Gastrocnemius medialis (tissue), 4 donors: ENCODE measurements at regions of chr7 and their contacts with region 1.

Region 1: GRCh38 chr7:154927624-154928143 is 75.2 kb downstream of the PAXIP1 start:
- DNase-seq: peak; percentile 65 to 71
- ATAC-seq: peak; percentile 80 to 84
- H3K4me3 ChIP-seq: peak overlapping the region; percentile 66 to 77 (median 72)
- H3K27ac ChIP-seq: peak overlapping the region; percentile 82 to 88 (median 84)
- H3K4me1 ChIP-seq: peaks cover 5 to 9% of the 10 kb centered on the region in 2 donors
- H3K27me3 ChIP-seq: no peaks in the 10 kb centered on the region
- CTCF ChIP-seq: peak; percentile 40 to 72 (median 69)
- POLR2A ChIP-seq: no peak

Region 2: DNA sequence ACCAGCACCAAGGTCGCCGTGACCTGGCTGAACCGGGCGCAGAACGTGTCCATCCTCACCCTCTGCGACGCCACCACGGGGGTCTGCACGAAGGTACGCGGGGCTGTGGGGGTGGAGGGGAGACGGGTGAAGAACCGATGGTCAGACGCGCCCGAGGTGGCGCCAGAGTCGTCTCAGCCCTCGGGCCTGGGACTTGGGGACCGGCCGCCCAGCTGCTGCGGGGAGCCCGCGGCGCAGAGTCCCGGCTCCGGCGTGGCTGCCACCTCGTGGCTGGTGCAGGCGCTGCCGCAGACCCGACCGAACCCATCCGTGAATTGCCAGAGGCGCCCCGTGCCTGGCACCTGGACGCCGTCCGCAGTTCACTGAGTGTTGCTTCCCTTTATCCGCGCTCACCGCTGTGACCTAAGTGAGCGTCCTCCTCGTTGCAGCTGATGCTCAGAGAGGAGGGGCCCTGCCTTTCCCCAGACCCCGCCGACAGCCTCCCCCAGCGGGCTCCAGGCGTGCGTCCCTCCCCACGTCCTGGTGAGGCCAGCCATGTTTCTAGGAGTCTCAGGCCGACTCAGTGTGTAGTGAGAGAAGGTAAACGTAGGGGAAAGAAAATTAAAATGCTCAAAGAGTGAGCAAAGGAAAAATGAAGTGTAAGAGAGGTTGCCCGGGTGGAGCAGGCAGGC is 133.4 kb before region 1 on chr7:
- in situ Hi-C with region 1: no loop called
- intact Hi-C with region 1: no loop called
- DNase-seq: no peak
- ATAC-seq: no peak
- H3K4me3 ChIP-seq: no peak overlapping the region
- H3K27ac ChIP-seq: no peak overlapping the region
- H3K4me1 ChIP-seq: no peaks in the 10 kb centered on the region
- H3K27me3 ChIP-seq: peaks cover 0 to 2% (median 0%) of the 10 kb centered on the region in 3 donors
- CTCF ChIP-seq: no peak
- POLR2A ChIP-seq: no peak

Region 3: GRCh38 chr7:154953006-154953684 is 25.5 kb after region 1 on chr7:
- in situ Hi-C with region 1: no loop called
- intact Hi-C with region 1: loop called (anchors 1 kb)
- DNase-seq: peak in 1 of 2 donors; percentile 19
- ATAC-seq: no peak
- H3K4me3 ChIP-seq: no peak overlapping the region
- H3K27ac ChIP-seq: no peak overlapping the region
- H3K4me1 ChIP-seq: no peaks in the 10 kb centered on the region
- H3K27me3 ChIP-seq: no peaks in the 10 kb centered on the region
- CTCF ChIP-seq: peak; percentile 35 to 61 (median 49)
- POLR2A ChIP-seq: no peak

Region 4: GRCh38 chr7:155003376-155004214 is 75.9 kb after region 1 on chr7:
- in situ Hi-C with region 1: loop called in 1 of 4 experiments (anchors 10 kb)
- intact Hi-C with region 1: loop called (anchors 1 kb)
- DNase-seq: peak; percentile 63 to 79
- ATAC-seq: peak; percentile 91 to 93
- H3K4me3 ChIP-seq: peak overlapping the region; percentile 74 to 96 (median 86)
- H3K27ac ChIP-seq: peak overlapping the region; percentile 87 to 97 (median 93)
- H3K4me1 ChIP-seq: peaks cover 17 to 18% of the 10 kb centered on the region in 2 donors
- H3K27me3 ChIP-seq: no peaks in the 10 kb centered on the region
- CTCF ChIP-seq: no peak
- POLR2A ChIP-seq: peak; percentile 85 to 86

Region 5: GRCh38 chr7:155190688-155191087 is 263.0 kb after region 1 on chr7:
- in situ Hi-C with region 1: loop called in 3 of 4 experiments (anchors 10 to 25 kb)
- intact Hi-C with region 1: loop called (anchors 10 kb)
- DNase-seq: peak in 1 of 2 donors; percentile 38
- ATAC-seq: peak; percentile 33 to 42
- H3K4me3 ChIP-seq: peak overlapping the region; percentile 22 to 39 (median 26)
- H3K27ac ChIP-seq: no peak overlapping the region
- H3K4me1 ChIP-seq: peaks cover 0 to 3% of the 10 kb centered on the region in 2 donors
- H3K27me3 ChIP-seq: peaks cover 0 to 3% (median 0%) of the 10 kb centered on the region in 3 donors
- CTCF ChIP-seq: peak; percentile 87 to 95 (median 89)
- POLR2A ChIP-seq: no peak

Region 6: DNA sequence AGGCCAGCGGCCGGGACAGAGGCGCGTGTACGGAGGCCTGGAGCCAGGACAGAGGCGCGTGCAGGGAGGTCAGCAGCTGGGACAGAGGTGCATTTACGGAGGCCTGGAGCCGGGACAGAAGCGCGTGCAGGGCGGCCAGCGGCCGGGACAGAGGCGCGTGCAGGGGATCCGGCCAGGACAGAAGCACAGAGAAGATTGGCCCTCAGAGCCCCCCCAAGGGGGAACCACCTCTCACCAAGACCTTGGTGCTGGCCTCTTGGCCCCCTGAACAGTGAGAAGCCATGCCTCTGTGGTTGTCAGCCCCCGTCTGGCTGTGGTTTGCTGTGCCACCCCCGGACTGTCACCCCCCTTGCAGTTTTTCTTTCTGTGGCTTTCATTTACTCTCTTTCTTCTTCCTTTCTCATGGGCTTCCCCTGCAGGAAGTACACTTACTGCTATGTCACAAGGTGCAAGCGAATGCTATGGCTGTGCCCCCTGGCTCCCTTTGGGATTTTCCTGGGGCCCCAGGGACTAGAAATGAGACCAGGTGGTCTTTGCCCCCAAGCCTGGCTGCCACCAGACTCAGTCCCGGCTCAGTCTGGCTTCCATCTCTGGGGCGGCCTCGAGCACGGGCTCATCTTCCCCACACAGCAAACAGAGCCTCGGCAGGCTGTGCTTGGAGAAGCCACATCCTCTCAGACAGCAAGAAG is 411.1 kb after region 1 on chr7:
- in situ Hi-C with region 1: loop called (anchors 10 to 25 kb)
- intact Hi-C with region 1: no loop called
- DNase-seq: no peak
- ATAC-seq: no peak
- H3K4me3 ChIP-seq: no peak overlapping the region
- H3K27ac ChIP-seq: no peak overlapping the region
- H3K4me1 ChIP-seq: no peaks in the 10 kb centered on the region
- H3K27me3 ChIP-seq: peaks cover 0 to 15% (median 12%) of the 10 kb centered on the region in 3 donors
- CTCF ChIP-seq: no peak
- POLR2A ChIP-seq: no peak

Region 7: DNA sequence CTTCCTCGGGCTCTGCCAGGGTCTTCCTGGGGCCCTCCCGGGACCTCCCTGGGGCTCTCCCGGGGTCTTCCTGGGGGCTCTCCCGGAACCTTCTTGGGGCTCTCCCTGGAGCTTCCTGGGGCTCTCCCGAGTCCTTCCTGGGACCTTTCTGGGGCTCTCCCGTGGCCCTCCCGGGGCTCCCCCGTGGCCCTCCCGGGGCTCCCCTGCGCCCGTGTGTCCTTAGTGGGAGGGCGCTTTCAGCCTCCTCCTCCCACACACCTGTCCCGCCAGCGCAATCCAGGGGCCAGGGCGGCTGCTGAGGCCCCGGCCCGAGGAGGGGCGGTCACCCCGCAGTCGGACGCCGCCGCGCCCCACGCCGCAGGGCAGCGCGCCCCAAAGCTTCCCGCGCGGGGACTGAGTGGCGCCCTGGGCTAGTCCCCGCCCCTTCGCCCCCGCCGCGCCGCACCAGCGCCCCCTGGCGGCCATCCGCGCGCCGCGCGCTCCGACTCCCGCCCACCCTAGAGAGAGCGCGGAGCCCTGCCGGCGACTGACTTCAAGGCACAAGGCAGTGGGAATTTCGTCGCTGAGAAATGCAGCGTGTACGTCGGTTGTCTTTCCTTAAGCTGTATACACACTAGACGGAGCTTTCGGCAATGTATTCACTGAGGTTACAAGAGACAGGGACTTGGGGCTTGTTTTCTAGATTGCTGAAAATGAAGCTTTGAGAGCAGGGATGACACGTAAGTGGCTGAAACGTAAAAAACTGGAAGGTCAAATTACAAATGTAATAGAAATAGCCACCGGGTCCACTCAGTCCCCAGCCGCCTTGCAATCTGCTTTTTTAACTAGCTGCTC is 417.1 kb after region 1 on chr7:
- in situ Hi-C with region 1: loop called in 2 of 4 experiments (anchors 10 to 25 kb)
- intact Hi-C with region 1: loop called (anchors 1 kb)
- DNase-seq: peak; percentile 19 to 52
- ATAC-seq: peak; percentile 95 to 100
- H3K4me3 ChIP-seq: peak overlapping the region; percentile 8 to 61 (median 38)
- H3K27ac ChIP-seq: no peak overlapping the region
- H3K4me1 ChIP-seq: peaks cover 0 to 4% of the 10 kb centered on the region in 2 donors
- H3K27me3 ChIP-seq: peaks cover 8 to 11% (median 11%) of the 10 kb centered on the region in 3 donors
- CTCF ChIP-seq: peak; percentile 78 to 99 (median 93)
- POLR2A ChIP-seq: no peak

Region 8: GRCh38 chr7:155763691-155764437 is 836.2 kb after region 1 on chr7:
- in situ Hi-C with region 1: loop called in 1 of 4 experiments (anchors 25 kb)
- intact Hi-C with region 1: loop called (anchors 10 kb)
- DNase-seq: no peak
- ATAC-seq: peak in 1 of 2 donors; percentile 11
- H3K4me3 ChIP-seq: no peak overlapping the region
- H3K27ac ChIP-seq: peak overlapping the region; percentile 20 to 52 (median 48)
- H3K4me1 ChIP-seq: peaks cover 19 to 28% of the 10 kb centered on the region in 2 donors
- H3K27me3 ChIP-seq: no peaks in the 10 kb centered on the region
- CTCF ChIP-seq: no peak
- POLR2A ChIP-seq: no peak